MCF 10A (cell line): ENCODE measurements at regions of chr11 and their contacts with region 1.

Region 1: GRCh38 chr11:64846998-64847666 is 2.7 kb upstream of the CDC42BPG start:
- DNase-seq: peak; percentile 94
- H3K4me3 Mint-ChIP-seq: no peak overlapping the region
- H3K27ac Mint-ChIP-seq: no peak overlapping the region
- H3K4me1 Mint-ChIP-seq: peaks cover 33% of the 10 kb centered on the region
- H3K27me3 Mint-ChIP-seq: no peaks in the 10 kb centered on the region
- CTCF ChIP-seq: peak; percentile 98

Region 2: GRCh38 chr11:64661146-64661545 is 186.0 kb before region 1 on chr11:
- CTCF ChIA-PET with region 1: no interaction called
- POLR2A ChIA-PET with region 1: no interaction called
- intact Hi-C with region 1: no loop called
- DNase-seq: no peak
- H3K4me3 Mint-ChIP-seq: no peak overlapping the region
- H3K27ac Mint-ChIP-seq: no peak overlapping the region
- H3K4me1 Mint-ChIP-seq: peaks cover 15% of the 10 kb centered on the region
- H3K27me3 Mint-ChIP-seq: no peaks in the 10 kb centered on the region
- CTCF ChIP-seq: no peak

Region 3: GRCh38 chr11:64787526-64788320 is 59.4 kb before region 1 on chr11:
- CTCF ChIA-PET with region 1: interaction called, 7 read pairs
- POLR2A ChIA-PET with region 1: interaction called, 3 read pairs
- intact Hi-C with region 1: loop called (anchors 1 kb)
- DNase-seq: peak; percentile 66
- H3K4me3 Mint-ChIP-seq: no peak overlapping the region
- H3K27ac Mint-ChIP-seq: no peak overlapping the region
- H3K4me1 Mint-ChIP-seq: no peaks in the 10 kb centered on the region
- H3K27me3 Mint-ChIP-seq: no peaks in the 10 kb centered on the region
- CTCF ChIP-seq: peak; percentile 81

Region 4: GRCh38 chr11:64810271-64810890 is 36.8 kb before region 1 on chr11 and contains the start of gene MEN1:
- CTCF ChIA-PET with region 1: interaction called, 3 read pairs
- POLR2A ChIA-PET with region 1: interaction called, 18 read pairs
- intact Hi-C with region 1: loop called (anchors 2 kb)
- DNase-seq: peak; percentile 95
- H3K4me3 Mint-ChIP-seq: peak within 1 kb of the TSS; percentile 99
- H3K27ac Mint-ChIP-seq: peak within 1 kb of the TSS; percentile 93
- H3K4me1 Mint-ChIP-seq: peaks cover 10% of the 10 kb centered on the region
- H3K27me3 Mint-ChIP-seq: no peaks in the 10 kb centered on the region
- CTCF ChIP-seq: no peak
- total RNA-seq, gene MEN1: 29.2 and 33.1 TPM in 2 replicates

Region 5: DNA sequence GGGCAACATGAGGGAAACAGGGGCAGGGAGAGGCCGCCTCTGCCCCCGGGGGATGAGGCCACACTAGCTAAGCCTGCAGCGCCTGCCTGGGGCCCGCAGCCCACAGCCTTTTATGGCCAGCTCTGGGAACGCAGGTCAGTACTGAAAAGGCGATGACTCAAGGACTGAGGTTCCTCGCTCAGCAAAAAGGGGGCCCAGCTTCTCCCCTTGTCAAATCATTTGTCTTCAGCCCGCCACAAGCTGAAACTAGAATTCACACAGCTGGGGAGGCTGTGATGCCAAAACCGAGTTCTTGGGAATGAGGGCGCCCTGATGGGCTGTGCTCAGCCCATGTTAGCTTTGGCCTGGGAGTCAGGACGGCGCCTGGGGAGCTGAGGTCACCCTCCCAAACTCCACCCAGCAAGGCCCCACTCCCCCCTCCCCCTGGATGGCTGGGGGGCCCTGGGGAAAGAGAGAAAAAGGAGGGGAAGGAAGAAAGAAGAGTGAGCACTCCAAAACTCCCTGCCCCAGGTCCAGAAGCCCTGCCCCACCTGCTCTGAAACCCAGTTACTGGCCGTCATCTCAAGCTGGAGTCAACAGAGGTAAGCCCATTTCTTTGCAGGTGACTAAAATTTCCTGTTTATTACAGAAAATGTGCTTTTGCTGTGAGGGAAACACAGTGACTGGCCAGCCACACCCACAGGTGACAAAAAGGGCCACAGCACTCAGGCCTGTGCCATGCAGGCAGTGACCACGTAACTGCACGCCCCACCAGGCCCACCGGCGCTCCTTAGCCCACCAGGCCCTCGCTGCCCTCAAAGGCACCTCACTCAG is 17.5 kb after region 1 on chr11:
- CTCF ChIA-PET with region 1: interaction called, 31 read pairs
- POLR2A ChIA-PET with region 1: interaction called, 5 read pairs
- intact Hi-C with region 1: no loop called
- DNase-seq: no peak
- H3K4me3 Mint-ChIP-seq: no peak overlapping the region
- H3K27ac Mint-ChIP-seq: peak overlapping the region; percentile 49
- H3K4me1 Mint-ChIP-seq: peaks cover 41% of the 10 kb centered on the region
- H3K27me3 Mint-ChIP-seq: no peaks in the 10 kb centered on the region
- CTCF ChIP-seq: no peak

Region 6: GRCh38 chr11:64894070-64894796 is 47.1 kb after region 1 on chr11:
- CTCF ChIA-PET with region 1: interaction called, 286 read pairs
- POLR2A ChIA-PET with region 1: interaction called, 3 read pairs
- intact Hi-C with region 1: loop called (anchors 1 kb)
- DNase-seq: peak; percentile 79
- H3K4me3 Mint-ChIP-seq: no peak overlapping the region
- H3K27ac Mint-ChIP-seq: no peak overlapping the region
- H3K4me1 Mint-ChIP-seq: no peaks in the 10 kb centered on the region
- H3K27me3 Mint-ChIP-seq: no peaks in the 10 kb centered on the region
- CTCF ChIP-seq: peak; percentile 91

Region 7: DNA sequence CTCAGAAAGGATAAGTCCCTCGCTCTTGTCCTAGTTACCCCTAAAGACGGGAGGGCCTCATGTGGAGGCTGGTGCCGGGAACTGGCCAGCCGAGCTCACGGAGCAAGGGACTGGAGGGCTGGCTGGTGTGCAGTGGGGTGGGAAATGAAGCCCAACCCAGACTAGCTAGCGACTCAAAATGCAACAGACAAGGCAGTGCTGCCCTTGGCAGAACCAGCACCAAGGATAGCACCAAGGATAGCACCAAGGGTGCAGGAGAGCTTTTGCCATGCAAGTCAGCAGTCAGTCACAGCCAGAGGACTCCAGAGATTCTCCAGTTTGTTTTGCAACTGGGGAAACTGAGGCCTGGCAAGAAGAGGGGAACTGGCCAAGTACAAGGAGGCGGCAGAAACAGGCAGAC is 156.2 kb after region 1 on chr11:
- CTCF ChIA-PET with region 1: interaction called, 4 read pairs
- POLR2A ChIA-PET with region 1: interaction called, 5 read pairs
- intact Hi-C with region 1: loop called (anchors 1 kb)
- DNase-seq: no peak
- H3K4me3 Mint-ChIP-seq: no peak overlapping the region
- H3K27ac Mint-ChIP-seq: no peak overlapping the region
- H3K4me1 Mint-ChIP-seq: no peaks in the 10 kb centered on the region
- H3K27me3 Mint-ChIP-seq: no peaks in the 10 kb centered on the region
- CTCF ChIP-seq: no peak

Region 8: GRCh38 chr11:65117216-65118096 is 270.3 kb after region 1 on chr11 and contains the start of gene ZNHIT2:
- CTCF ChIA-PET with region 1: interaction called, 12 read pairs
- POLR2A ChIA-PET with region 1: interaction called, 11 read pairs
- intact Hi-C with region 1: loop called (anchors 1 kb)
- DNase-seq: peak; percentile 99
- H3K4me3 Mint-ChIP-seq: peak within 1 kb of the TSS; percentile 82
- H3K27ac Mint-ChIP-seq: peak within 1 kb of the TSS; percentile 88
- H3K4me1 Mint-ChIP-seq: peaks cover 16% of the 10 kb centered on the region
- H3K27me3 Mint-ChIP-seq: no peaks in the 10 kb centered on the region
- CTCF ChIP-seq: peak; percentile 84
- total RNA-seq, gene ZNHIT2: 22.0 and 23.6 TPM in 2 replicates